Aorta (tissue), 5 donors: ENCODE measurements at regions of chr1 and their contacts with region 1.

Region 1: DNA sequence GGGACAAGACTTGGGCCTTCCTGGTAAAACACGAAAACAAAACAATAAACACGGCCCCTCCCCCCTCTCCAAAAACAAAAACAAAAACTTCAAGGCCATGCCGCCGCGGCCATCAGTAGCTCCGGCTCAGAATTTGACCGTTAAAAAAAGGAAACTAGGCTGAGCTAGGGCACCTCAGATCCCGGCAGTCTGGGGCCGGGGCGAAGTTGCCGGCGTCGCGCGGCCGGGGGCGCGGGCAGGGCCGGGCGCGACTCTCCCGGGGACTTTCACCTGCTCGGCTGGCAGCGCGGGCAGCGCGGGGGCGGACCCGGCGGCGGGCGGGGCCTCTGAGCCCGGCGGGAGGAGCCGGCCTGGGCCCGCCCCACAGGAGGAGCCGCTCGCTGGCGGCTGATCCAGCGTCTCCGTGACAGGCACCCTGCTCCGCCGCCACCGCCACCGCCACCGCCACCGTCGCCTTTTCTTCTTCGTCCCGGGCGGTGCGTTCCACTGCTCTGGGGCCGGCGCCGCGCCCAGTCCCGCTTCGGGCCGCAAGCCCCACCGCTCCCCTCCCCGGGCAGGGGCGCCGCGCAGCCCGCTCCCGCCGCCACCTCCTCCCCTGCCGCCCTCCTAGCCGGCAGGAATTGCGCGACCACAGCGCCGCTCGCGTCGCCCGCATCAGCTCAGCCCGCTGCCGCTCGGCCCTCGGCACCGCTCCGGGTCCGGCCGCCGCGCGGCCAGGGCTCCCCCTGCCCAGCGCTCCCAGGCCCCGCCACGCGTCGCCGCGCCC is at the start of gene NOS1AP:
- DNase-seq: peak; percentile 84 to 94
- ATAC-seq: peak; percentile 94
- H3K4me3 ChIP-seq: peak within 1 kb of the TSS; percentile 48 to 63
- H3K27ac ChIP-seq: no peak within 1 kb of the TSS
- H3K4me1 ChIP-seq: peaks cover 0 to 5% of the 10 kb centered on the region in 2 donors
- H3K27me3 ChIP-seq: no peaks in the 10 kb centered on the region
- total RNA-seq, gene NOS1AP: 3.5 to 4.8 TPM

Region 2: DNA sequence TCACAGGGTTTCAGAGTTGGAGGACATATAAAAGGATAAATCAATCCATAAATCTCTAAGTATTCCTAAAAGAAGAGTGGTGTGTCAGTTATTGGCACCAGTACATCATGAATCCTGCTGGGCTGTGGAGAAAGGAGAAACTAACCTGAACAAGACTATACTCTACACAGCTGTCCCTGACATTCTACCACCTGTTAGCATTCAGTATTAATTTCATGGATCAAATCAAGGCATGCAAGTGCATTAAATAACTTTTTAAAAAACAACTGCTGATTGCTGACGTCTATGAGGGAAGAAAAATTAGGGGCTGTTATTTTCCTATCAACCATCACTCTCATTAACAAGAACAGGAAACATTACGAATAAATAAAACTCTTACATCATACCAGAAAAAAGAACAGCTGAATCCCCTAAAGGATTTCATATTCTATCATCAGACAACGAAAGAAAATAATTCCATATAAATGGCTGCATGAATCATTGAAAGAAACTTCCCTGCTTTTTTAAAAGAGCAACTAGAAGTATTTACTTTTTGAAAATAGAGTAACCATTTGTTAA is 181.7 kb before region 1 on chr1:
- intact Hi-C with region 1: no loop called
- DNase-seq: no peak
- ATAC-seq: no peak
- H3K4me3 ChIP-seq: no peak overlapping the region
- H3K27ac ChIP-seq: no peak overlapping the region
- H3K4me1 ChIP-seq: no peaks in the 10 kb centered on the region
- H3K27me3 ChIP-seq: no peaks in the 10 kb centered on the region

Region 3: GRCh38 chr1:162206749-162207635 is 137.5 kb after region 1 on chr1:
- intact Hi-C with region 1: loop called in 1 of 2 experiments (anchors 5 kb)
- DNase-seq: peak in 1 of 2 donors; percentile 51
- ATAC-seq: no peak
- H3K4me3 ChIP-seq: no peak overlapping the region
- H3K27ac ChIP-seq: peak overlapping the region in 1 of 2 donors; percentile 58
- H3K4me1 ChIP-seq: peaks cover 0 to 4% of the 10 kb centered on the region in 2 donors
- H3K27me3 ChIP-seq: no peaks in the 10 kb centered on the region